Mammary epithelial cell (primary cell): ENCODE measurements at regions of chr2 and their contacts with region 1.

Region 1: GRCh38 chr2:48984922-48985321 is 169.4 kb downstream of the FSHR start:
- DNase-seq: no peak
- H3K4me3 ChIP-seq: no peak overlapping the region
- H3K27ac ChIP-seq: no peak overlapping the region
- H3K4me1 ChIP-seq: no peaks in the 10 kb centered on the region
- H3K27me3 ChIP-seq: no peaks in the 10 kb centered on the region
- CTCF ChIP-seq: no peak

Region 2: GRCh38 chr2:48920947-48921346 is 64.0 kb before region 1 on chr2:
- CTCF ChIA-PET with region 1: no interaction called
- dilution Hi-C with region 1: no loop called
- in situ Hi-C with region 1: no loop called
- intact Hi-C with region 1: no loop called
- DNase-seq: no peak
- H3K4me3 ChIP-seq: no peak overlapping the region
- H3K27ac ChIP-seq: no peak overlapping the region
- H3K4me1 ChIP-seq: no peaks in the 10 kb centered on the region
- H3K27me3 ChIP-seq: no peaks in the 10 kb centered on the region
- CTCF ChIP-seq: no peak

Region 3: GRCh38 chr2:49067971-49068370 is 83.0 kb after region 1 on chr2:
- CTCF ChIA-PET with region 1: no interaction called
- dilution Hi-C with region 1: loop called (anchors 5 kb)
- in situ Hi-C with region 1: no loop called
- intact Hi-C with region 1: no loop called
- DNase-seq: no peak
- H3K4me3 ChIP-seq: no peak overlapping the region
- H3K27ac ChIP-seq: no peak overlapping the region
- H3K4me1 ChIP-seq: no peaks in the 10 kb centered on the region
- H3K27me3 ChIP-seq: no peaks in the 10 kb centered on the region
- CTCF ChIP-seq: no peak

Region 4: DNA sequence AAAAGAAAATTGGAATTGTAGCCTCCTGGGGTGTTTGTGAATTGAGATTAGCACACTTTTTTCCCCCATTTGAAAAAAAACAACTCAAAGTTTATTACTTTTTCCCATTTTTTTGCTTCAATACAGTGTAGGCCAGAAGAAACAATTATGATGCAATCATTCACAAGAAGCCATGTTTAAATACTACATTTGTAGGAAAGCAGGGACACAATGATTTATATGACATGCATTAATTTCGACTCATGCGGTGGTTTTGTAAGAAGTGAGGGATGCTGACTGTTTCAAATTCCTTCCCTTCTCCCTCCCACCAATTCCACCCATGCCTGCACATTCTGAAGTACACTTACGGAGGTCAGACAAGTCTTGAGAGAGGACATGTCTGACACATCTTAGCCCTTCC is 943.6 kb after region 1 on chr2:
- CTCF ChIA-PET with region 1: no interaction called
- dilution Hi-C with region 1: no loop called
- in situ Hi-C with region 1: no loop called
- intact Hi-C with region 1: no loop called
- DNase-seq: no peak
- H3K4me3 ChIP-seq: no peak overlapping the region
- H3K27ac ChIP-seq: no peak overlapping the region
- H3K4me1 ChIP-seq: no peaks in the 10 kb centered on the region
- H3K27me3 ChIP-seq: no peaks in the 10 kb centered on the region
- CTCF ChIP-seq: no peak